ENCODE measurements at regions of chrX and their contacts with region 1.

Region 1: GRCh38 chrX:111445486-111445885 is 33.5 kb upstream of the DCX start:
- DNase-seq: peak; percentile 16
- H3K4me3 ChIP-seq: no peak overlapping the region
- H3K27ac ChIP-seq: no peak overlapping the region
- H3K4me1 ChIP-seq: no peaks in the 10 kb centered on the region
- H3K27me3 ChIP-seq: no peaks in the 10 kb centered on the region; the same call in 1 of the 2 replicates
- CTCF ChIP-seq: peak; percentile 76
- EP300 ChIP-seq: no peak
- RAD21 ChIP-seq: peak; percentile 81

Region 2: GRCh38 chrX:111360839-111361238 is 84.6 kb before region 1 on chrX:
- CTCF ChIA-PET with region 1: interaction called, 11 read pairs
- POLR2A ChIA-PET with region 1: no interaction called
- DNase-seq: no peak
- H3K4me3 ChIP-seq: no peak overlapping the region
- H3K27ac ChIP-seq: no peak overlapping the region
- H3K4me1 ChIP-seq: peaks cover 0 to 5% of the 10 kb centered on the region in 2 experiments; a peak in 2 of 4 replicates
- H3K27me3 ChIP-seq: no peaks in the 10 kb centered on the region
- CTCF ChIP-seq: no peak
- EP300 ChIP-seq: no peak
- RAD21 ChIP-seq: peak; percentile 56

Region 3: GRCh38 chrX:111411983-111412382 is 33.5 kb before region 1 on chrX and contains the start of gene DCX:
- CTCF ChIA-PET with region 1: interaction called, 10 read pairs
- POLR2A ChIA-PET with region 1: no interaction called
- DNase-seq: peak; percentile 4
- H3K4me3 ChIP-seq: peak within 1 kb of the TSS in 1 of 2 experiments; percentile 33; a peak in 1 of 4 replicates
- H3K27ac ChIP-seq: peak within 1 kb of the TSS in 1 of 2 experiments; percentile 79; a peak in 2 of 4 replicates
- H3K4me1 ChIP-seq: peaks cover 0 to 4% of the 10 kb centered on the region in 2 experiments; a peak in 2 of 4 replicates
- H3K27me3 ChIP-seq: no peaks in the 10 kb centered on the region; the same call in 1 of the 2 replicates
- CTCF ChIP-seq: no peak
- EP300 ChIP-seq: no peak
- RAD21 ChIP-seq: no peak
- polyA plus RNA-seq, gene DCX: 0.26 and 0.88 TPM in 2 replicates

Region 4: GRCh38 chrX:111431001-111431400 is 14.5 kb before region 1 on chrX:
- CTCF ChIA-PET with region 1: interaction called, 45 read pairs
- POLR2A ChIA-PET with region 1: no interaction called
- DNase-seq: no peak
- H3K4me3 ChIP-seq: no peak overlapping the region
- H3K27ac ChIP-seq: no peak overlapping the region
- H3K4me1 ChIP-seq: no peaks in the 10 kb centered on the region; a peak in 1 of 4 replicates
- H3K27me3 ChIP-seq: no peaks in the 10 kb centered on the region; the same call in 1 of the 2 replicates
- CTCF ChIP-seq: no peak
- EP300 ChIP-seq: no peak
- RAD21 ChIP-seq: no peak

Region 5: DNA sequence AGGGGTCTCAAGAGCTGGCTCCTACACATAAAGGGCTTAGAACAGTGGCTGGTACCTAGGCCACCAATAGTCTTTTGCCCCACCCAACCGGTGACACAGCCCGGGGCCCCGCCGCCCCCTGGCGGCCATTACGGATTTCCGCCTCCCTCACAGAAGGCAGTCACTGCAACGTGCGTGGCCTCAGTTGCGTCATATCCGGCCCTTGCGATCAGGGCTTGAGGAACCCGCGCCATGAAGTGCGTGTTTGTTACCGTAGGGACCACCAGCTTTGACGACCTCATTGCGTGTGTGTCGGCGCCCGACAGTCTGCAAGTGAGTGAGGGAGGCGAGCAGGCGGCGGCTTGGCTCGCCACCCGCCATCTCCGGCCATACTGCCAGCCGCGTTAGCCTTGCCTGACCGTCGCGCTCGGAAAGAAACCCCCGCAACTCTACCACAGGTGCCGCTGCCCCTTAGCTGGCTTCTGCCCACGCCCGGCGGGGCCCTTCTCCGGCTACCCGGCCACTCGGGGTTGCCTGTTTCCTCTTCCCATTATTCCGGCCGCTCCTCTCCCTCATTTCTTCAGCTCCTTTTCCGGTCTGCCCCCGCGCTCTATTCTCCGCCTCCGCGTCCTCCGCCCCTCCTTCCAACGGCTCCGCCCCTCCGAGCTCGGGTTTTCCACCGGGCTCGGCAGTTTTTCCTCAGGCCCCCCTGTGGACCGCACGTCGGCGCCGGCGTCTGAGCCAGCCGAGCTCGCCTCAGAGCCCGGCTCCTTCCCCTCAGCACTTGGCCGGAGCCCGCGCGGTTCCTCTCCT is 235.7 kb after region 1 on chrX and contains the start of gene ALG13:
- CTCF ChIA-PET with region 1: interaction called, 11 read pairs
- POLR2A ChIA-PET with region 1: interaction called, 5 read pairs
- DNase-seq: peak; percentile 94
- H3K4me3 ChIP-seq: peak within 1 kb of the TSS; percentile 82 to 87
- H3K27ac ChIP-seq: peak within 1 kb of the TSS; percentile 94 to 96
- H3K4me1 ChIP-seq: peaks cover 4 to 7% of the 10 kb centered on the region in 2 experiments; a peak in 2 of 4 replicates
- H3K27me3 ChIP-seq: no peaks in the 10 kb centered on the region
- CTCF ChIP-seq: peak; percentile 89
- EP300 ChIP-seq: peak in 1 of 2 experiments; percentile 21; a peak in 1 of 4 replicates
- RAD21 ChIP-seq: peak; percentile 50
- polyA plus RNA-seq, gene ALG13: 76.7 and 89.7 TPM in 2 replicates

Measured in SK-N-SH (cell line).